Naive thymus-derived CD4-positive, alpha-beta T cell (primary cell): ENCODE measurements at regions of chr10 and their contacts with region 1.

Region 1: DNA sequence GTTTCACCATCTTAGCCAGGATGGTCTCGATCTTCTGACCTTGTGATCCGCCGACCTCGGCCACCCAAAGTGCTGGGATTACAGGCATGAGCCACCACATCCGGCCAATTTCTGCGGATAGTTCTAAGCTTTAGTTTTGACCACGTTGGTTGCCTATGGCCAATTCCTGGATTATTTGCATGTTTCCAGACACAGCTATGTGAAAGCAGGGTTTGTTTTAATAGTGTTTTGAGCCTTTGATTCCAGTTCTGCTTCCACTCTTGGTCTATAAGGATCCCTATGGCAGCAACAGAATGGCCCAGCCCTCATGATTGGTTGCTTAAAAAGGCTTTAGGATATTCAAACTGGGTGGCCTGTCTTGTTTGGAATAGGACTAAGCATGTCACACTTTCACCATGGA is 19.1 kb downstream of the SIRT1 start:
- DNase-seq: no peak
- ATAC-seq: no peak
- H3K4me3 ChIP-seq: no peak overlapping the region
- H3K4me3 Mint-ChIP-seq: no peak overlapping the region
- H3K27ac ChIP-seq: no peak overlapping the region
- H3K27ac Mint-ChIP-seq: no peak overlapping the region
- H3K4me1 ChIP-seq: peaks cover 0 to 4% of the 10 kb centered on the region in 2 donors
- H3K4me1 Mint-ChIP-seq: peaks cover 6 to 53% (median 33%) of the 10 kb centered on the region in 7 donors
- H3K27me3 ChIP-seq: no peaks in the 10 kb centered on the region
- H3K27me3 Mint-ChIP-seq: no peaks in the 10 kb centered on the region

Region 2: DNA sequence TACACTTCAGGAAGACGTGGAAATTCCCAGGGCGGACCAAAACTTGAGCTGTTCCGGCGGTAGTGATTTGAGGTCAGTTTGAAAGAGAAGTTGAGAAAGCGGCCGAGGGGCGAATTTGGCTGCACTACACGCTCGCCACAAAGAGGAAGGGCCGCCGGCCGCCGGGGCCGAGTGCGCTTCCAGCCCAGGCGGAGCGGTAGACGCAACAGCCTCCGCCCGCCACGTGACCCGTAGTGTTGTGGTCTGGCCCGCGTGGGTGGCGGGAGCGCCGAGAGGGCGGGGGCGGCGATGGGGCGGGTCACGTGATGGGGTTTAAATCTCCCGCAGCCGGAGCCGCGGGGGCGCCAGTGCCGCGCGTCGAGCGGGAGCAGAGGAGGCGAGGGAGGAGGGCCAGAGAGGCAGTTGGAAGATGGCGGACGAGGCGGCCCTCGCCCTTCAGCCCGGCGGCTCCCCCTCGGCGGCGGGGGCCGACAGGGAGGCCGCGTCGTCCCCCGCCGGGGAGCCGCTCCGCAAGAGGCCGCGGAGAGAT is 19.2 kb before region 1 on chr10 and contains the start of gene SIRT1:
- CTCF ChIA-PET with region 1: no interaction called
- POLR2A ChIA-PET with region 1: interaction called, 7 read pairs
- intact Hi-C with region 1: loop called in 1 of 2 experiments (anchors 2 kb)
- DNase-seq: peak; percentile 87 to 95 (median 90)
- ATAC-seq: peak; percentile 89
- H3K4me3 ChIP-seq: peak within 1 kb of the TSS; percentile 75
- H3K4me3 Mint-ChIP-seq: peak within 1 kb of the TSS; percentile 86 to 98 (median 95)
- H3K27ac ChIP-seq: peak within 1 kb of the TSS; percentile 83
- H3K27ac Mint-ChIP-seq: peak within 1 kb of the TSS; percentile 90 to 98 (median 95)
- H3K4me1 ChIP-seq: peaks cover 12 to 16% of the 10 kb centered on the region in 2 donors
- H3K4me1 Mint-ChIP-seq: peaks cover 27 to 43% (median 35%) of the 10 kb centered on the region in 7 donors
- H3K27me3 ChIP-seq: no peaks in the 10 kb centered on the region
- H3K27me3 Mint-ChIP-seq: peaks cover 0 to 5% (median 0%) of the 10 kb centered on the region in 5 donors
- total RNA-seq, gene SIRT1: 25.9 to 66.8 (median 59.5) TPM